ENCODE measurements at regions of chr7 and their contacts with region 1.

Region 1: DNA sequence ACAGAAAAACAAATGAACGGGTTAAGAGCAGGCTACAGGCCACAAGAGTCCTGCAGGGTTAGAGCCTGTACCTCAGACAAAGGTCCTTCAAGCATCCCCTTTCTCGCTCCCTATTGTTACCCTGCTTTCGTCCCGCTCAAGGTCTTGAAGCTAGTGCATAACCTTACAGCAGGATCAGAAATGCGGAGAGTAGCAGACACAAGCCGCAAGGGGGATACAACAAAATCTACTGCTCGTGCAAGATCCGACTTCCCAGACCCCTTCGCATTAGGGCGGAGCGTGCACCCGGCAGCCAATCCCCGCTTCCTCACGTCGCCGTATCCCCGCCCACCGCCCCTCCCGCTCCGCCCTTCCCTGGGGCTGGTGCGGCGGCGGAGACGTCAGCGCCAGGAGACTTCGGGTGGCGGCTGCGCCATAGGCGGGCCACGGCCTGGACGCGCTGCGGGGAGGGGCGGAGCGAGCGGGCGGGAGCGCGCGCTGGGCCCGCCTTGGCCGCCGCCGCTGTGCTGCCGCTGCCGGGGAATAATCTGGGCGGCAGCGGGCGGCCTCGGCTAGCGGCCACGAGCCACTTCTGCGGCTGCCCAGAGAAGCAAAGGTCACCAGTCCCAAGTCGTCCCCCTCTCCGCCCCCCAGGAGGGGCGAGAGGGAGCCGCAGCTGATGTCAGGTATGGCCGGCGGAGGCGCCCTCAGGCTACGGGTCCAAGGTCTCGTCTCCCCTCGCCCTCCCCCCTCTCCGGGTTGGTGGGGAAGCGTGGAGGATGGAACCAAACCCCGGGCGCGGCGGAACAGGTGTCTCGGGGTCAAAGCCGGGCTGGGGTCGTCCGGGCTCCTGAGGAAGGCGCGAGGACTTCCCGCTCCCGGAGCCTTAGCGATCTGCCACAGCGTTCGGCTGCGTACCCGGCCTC is at the start of gene C1GALT1:
- DNase-seq: peak; percentile 97 to 99 (median 98)
- H3K4me3 ChIP-seq: peak within 1 kb of the TSS; percentile 55 to 60
- H3K4me3 Mint-ChIP-seq: peak within 1 kb of the TSS; percentile 83 to 99 (median 94)
- H3K27ac ChIP-seq: peak within 1 kb of the TSS; percentile 96
- H3K27ac Mint-ChIP-seq: peak within 1 kb of the TSS; percentile 94 to 98 (median 97)
- H3K4me1 ChIP-seq: peaks cover 50% of the 10 kb centered on the region
- H3K4me1 Mint-ChIP-seq: peaks cover 12 to 21% (median 17%) of the 10 kb centered on the region in 4 donors
- H3K27me3 ChIP-seq: no peaks in the 10 kb centered on the region
- H3K27me3 Mint-ChIP-seq: no peaks in the 10 kb centered on the region
- total RNA-seq, gene C1GALT1: 54.6 to 54.8 TPM

Region 2: GRCh38 chr7:7103343-7104313 is 78.8 kb before region 1 on chr7:
- CTCF ChIA-PET with region 1: interaction called, 66 read pairs
- POLR2A ChIA-PET with region 1: interaction called, 68 read pairs
- intact Hi-C with region 1: loop called (anchors 1 kb)
- DNase-seq: peak in 4 of 5 donors; percentile 54 to 66 (median 60)
- H3K4me3 ChIP-seq: no peak overlapping the region
- H3K4me3 Mint-ChIP-seq: peak overlapping the region in 1 of 8 donors; percentile 35
- H3K27ac ChIP-seq: no peak overlapping the region
- H3K27ac Mint-ChIP-seq: peak overlapping the region in 2 of 7 donors; percentile 14 to 75
- H3K4me1 ChIP-seq: peaks cover 15% of the 10 kb centered on the region
- H3K4me1 Mint-ChIP-seq: peaks cover 9 to 24% (median 15%) of the 10 kb centered on the region in 4 donors
- H3K27me3 ChIP-seq: no peaks in the 10 kb centered on the region
- H3K27me3 Mint-ChIP-seq: no peaks in the 10 kb centered on the region

Region 3: GRCh38 chr7:7201578-7202374 is 19.4 kb after region 1 on chr7:
- CTCF ChIA-PET with region 1: interaction called, 6 read pairs
- POLR2A ChIA-PET with region 1: interaction called, 32 read pairs
- intact Hi-C with region 1: loop called (anchors 2 kb)
- DNase-seq: peak; percentile 47 to 59 (median 56)
- H3K4me3 ChIP-seq: no peak overlapping the region
- H3K4me3 Mint-ChIP-seq: peak overlapping the region; percentile 38 to 87 (median 76)
- H3K27ac ChIP-seq: peak overlapping the region; percentile 41
- H3K27ac Mint-ChIP-seq: peak overlapping the region; percentile 65 to 93 (median 90)
- H3K4me1 ChIP-seq: peaks cover 44% of the 10 kb centered on the region
- H3K4me1 Mint-ChIP-seq: peaks cover 63 to 90% (median 79%) of the 10 kb centered on the region in 4 donors
- H3K27me3 ChIP-seq: no peaks in the 10 kb centered on the region
- H3K27me3 Mint-ChIP-seq: no peaks in the 10 kb centered on the region

Region 4: DNA sequence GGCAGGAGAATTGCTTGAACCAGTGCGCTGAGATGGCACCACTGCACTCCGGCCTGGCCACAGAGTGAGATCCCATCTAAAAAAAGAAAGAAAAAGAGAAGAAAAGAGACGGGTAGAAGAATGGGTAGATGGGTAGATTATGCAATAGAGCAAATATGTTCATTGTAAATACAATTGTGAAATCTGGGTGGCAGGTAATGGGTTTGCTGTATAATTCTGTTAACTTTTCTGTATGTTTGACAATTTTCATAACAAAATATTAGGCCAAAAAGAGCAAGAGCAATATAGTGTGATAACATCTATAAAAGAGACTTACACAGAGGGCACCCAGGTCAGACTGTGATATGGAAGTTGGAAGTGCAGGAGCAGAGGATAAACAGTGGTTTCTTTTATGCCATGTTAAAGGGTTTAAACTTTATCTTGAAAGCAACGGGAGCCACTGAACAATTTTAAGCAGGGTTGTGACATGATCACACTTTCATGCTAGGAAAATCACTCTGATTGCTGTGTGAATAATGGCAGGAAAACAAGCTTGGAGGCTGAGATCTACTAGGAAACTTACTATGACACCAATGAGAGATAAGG is 359.9 kb after region 1 on chr7:
- CTCF ChIA-PET with region 1: interaction called, 7 read pairs
- POLR2A ChIA-PET with region 1: interaction called, 3 read pairs
- intact Hi-C with region 1: loop called (anchors 2 kb)
- DNase-seq: no peak
- H3K4me3 ChIP-seq: no peak overlapping the region
- H3K4me3 Mint-ChIP-seq: no peak overlapping the region
- H3K27ac ChIP-seq: no peak overlapping the region
- H3K27ac Mint-ChIP-seq: no peak overlapping the region
- H3K4me1 ChIP-seq: no peaks in the 10 kb centered on the region
- H3K4me1 Mint-ChIP-seq: peaks cover 0 to 3% (median under 1%) of the 10 kb centered on the region in 4 donors
- H3K27me3 ChIP-seq: no peaks in the 10 kb centered on the region
- H3K27me3 Mint-ChIP-seq: peaks cover 0 to 1% of the 10 kb centered on the region in 2 donors

Region 5: GRCh38 chr7:7761340-7761980 is 579.1 kb after region 1 on chr7:
- CTCF ChIA-PET with region 1: interaction called, 3 read pairs
- POLR2A ChIA-PET with region 1: no interaction called
- intact Hi-C with region 1: loop called (anchors 5 kb)
- DNase-seq: peak in 4 of 5 donors; percentile 46 to 56 (median 49)
- H3K4me3 ChIP-seq: peak overlapping the region; percentile 4 to 75
- H3K4me3 Mint-ChIP-seq: peak overlapping the region; percentile 81 to 98 (median 92)
- H3K27ac ChIP-seq: peak overlapping the region; percentile 67
- H3K27ac Mint-ChIP-seq: peak overlapping the region; percentile 89 to 98 (median 95)
- H3K4me1 ChIP-seq: peaks cover 35% of the 10 kb centered on the region
- H3K4me1 Mint-ChIP-seq: peaks cover 35 to 40% (median 39%) of the 10 kb centered on the region in 4 donors
- H3K27me3 ChIP-seq: no peaks in the 10 kb centered on the region
- H3K27me3 Mint-ChIP-seq: no peaks in the 10 kb centered on the region

Region 6: GRCh38 chr7:8295638-8296361 is 1113.4 kb after region 1 on chr7:
- CTCF ChIA-PET with region 1: no interaction called
- POLR2A ChIA-PET with region 1: no interaction called
- intact Hi-C with region 1: loop called (anchors 5 kb)
- DNase-seq: peak; percentile 44 to 54 (median 52)
- H3K4me3 ChIP-seq: no peak overlapping the region
- H3K4me3 Mint-ChIP-seq: no peak overlapping the region
- H3K27ac ChIP-seq: no peak overlapping the region
- H3K27ac Mint-ChIP-seq: no peak overlapping the region
- H3K4me1 ChIP-seq: no peaks in the 10 kb centered on the region
- H3K4me1 Mint-ChIP-seq: peaks cover 0 to 1% (median 0%) of the 10 kb centered on the region in 4 donors
- H3K27me3 ChIP-seq: no peaks in the 10 kb centered on the region
- H3K27me3 Mint-ChIP-seq: peaks cover 8 to 12% of the 10 kb centered on the region in 2 donors